Left cardiac atrium (tissue), 4 donors: ENCODE measurements at regions of chr12 and their contacts with region 1.

Region 1: GRCh38 chr12:40622246-40622838 is 69.9 kb upstream of the CNTN1 start:
- DNase-seq: peak; percentile 49
- ATAC-seq: no peak

Region 2: GRCh38 chr12:40534828-40535227 is 87.5 kb before region 1 on chr12:
- intact Hi-C with region 1: no loop called
- DNase-seq: no peak
- ATAC-seq: no peak

Region 3: DNA sequence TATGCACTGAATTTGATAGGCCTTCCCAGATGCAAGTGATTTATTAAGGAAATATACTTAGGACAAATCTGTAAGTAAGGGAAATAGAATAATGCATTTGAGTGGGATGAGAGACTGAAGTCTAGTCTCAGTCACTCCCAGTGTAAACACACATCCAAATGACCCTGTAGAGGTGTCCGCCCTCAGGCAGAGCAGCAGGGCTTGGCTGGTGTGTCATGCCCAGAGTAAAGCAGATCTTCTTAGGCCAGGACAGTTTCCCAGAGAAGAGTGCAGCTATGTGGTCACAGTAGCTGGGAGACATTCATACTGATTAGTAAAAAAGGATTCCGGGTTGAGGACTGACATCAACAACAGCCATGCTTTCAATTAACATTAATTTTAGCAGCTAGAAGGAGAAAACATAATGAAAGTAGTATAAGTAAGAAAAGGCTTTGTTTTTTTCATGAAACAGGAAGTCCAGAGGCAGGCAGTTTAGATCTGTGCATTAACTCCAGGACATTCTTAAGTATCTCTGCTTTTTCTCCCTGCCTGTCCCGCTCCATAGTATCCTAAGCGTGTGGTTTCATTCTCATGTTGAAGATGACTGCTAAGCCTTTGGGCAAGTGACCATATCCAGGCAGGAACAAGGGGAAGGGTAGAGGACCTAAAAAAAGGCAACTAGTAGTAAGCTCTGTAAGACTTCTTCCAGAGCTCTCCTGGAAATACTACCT is 105.6 kb after region 1 on chr12:
- intact Hi-C with region 1: no loop called
- DNase-seq: no peak
- ATAC-seq: no peak

Region 4: GRCh38 chr12:40911676-40912075 is 289.3 kb after region 1 on chr12:
- intact Hi-C with region 1: loop called in 1 of 2 experiments (anchors 10 kb)
- DNase-seq: no peak
- ATAC-seq: no peak